HepG2 (cell line): ENCODE measurements at regions of chr2 and their contacts with region 1.

Region 1: GRCh38 chr2:38602732-38603401 is at the start of gene HNRNPLL:
- DNase-seq: peak; percentile 96
- ATAC-seq: peak; percentile 90
- H3K4me3 ChIP-seq: peak within 1 kb of the TSS; percentile 95 to 98 (median 97)
- H3K27ac ChIP-seq: peak within 1 kb of the TSS; percentile 92
- H3K4me1 ChIP-seq: peaks cover 47% of the 10 kb centered on the region
- H3K27me3 ChIP-seq: no peaks in the 10 kb centered on the region; a peak in 2 of 5 replicates
- CTCF ChIP-seq: peak; percentile 18; the same call in 1 of the 2 replicates
- EP300 ChIP-seq: no peak
- POLR2A ChIP-seq: peak; percentile 97
- RAD21 ChIP-seq: peak; percentile 40
- total RNA-seq, gene HNRNPLL: 91.9 and 103 TPM in 2 replicates

Region 2: GRCh38 chr2:38581193-38582147 is 21.4 kb before region 1 on chr2:
- CTCF ChIA-PET with region 1: no interaction called
- POLR2A ChIA-PET with region 1: interaction called, 13 read pairs
- in situ Hi-C with region 1: no loop called
- intact Hi-C with region 1: loop called (anchors 2 kb)
- DNase-seq: peak; percentile 80
- ATAC-seq: peak; percentile 89
- H3K4me3 ChIP-seq: no peak overlapping the region
- H3K27ac ChIP-seq: no peak overlapping the region
- H3K4me1 ChIP-seq: peaks cover 22% of the 10 kb centered on the region
- H3K27me3 ChIP-seq: no peaks in the 10 kb centered on the region
- CTCF ChIP-seq: peak; percentile 81
- EP300 ChIP-seq: no peak
- POLR2A ChIP-seq: no peak
- RAD21 ChIP-seq: peak; percentile 85

Region 3: DNA sequence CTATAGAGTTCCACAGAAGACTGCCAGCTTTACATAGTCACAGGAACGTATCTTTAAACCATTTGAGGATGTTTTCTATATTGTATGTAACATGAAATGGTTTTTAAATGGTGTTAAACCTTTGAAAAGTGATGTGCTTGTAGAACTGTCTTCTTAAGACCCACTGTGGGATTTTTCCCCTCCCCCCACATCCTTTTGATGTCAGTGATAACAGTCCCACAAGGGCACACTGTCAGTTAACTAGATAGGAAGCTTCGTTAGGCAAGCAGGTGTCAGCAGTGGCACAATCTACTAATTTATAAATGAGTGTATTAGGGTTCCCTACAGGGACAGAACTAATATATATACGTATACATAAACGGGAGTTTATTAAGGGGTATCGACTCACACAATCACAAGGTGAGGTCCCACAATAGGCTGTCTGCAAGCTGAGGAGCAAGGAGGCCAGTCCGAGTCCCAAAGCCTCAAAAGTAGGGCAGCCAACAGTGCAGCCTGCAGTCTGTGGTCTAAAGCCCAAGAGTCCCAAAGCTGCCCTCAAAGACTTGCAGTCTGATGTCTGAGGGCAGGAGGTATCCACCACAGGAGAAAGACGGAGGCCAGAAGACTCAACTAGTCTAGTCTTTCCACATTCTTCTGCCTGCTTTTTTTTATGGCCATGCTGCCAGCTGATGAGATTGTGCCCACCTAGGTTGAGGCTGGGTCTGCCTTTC is 23.6 kb after region 1 on chr2:
- CTCF ChIA-PET with region 1: no interaction called
- POLR2A ChIA-PET with region 1: interaction called, 3 read pairs
- in situ Hi-C with region 1: no loop called
- intact Hi-C with region 1: loop called (anchors 2 kb)
- DNase-seq: no peak
- ATAC-seq: peak; percentile 19; the same call in 2 of the 3 replicates
- H3K4me3 ChIP-seq: no peak overlapping the region
- H3K27ac ChIP-seq: no peak overlapping the region
- H3K4me1 ChIP-seq: peaks cover 52% of the 10 kb centered on the region
- H3K27me3 ChIP-seq: no peaks in the 10 kb centered on the region
- CTCF ChIP-seq: no peak
- EP300 ChIP-seq: no peak
- POLR2A ChIP-seq: no peak
- RAD21 ChIP-seq: no peak

Region 4: GRCh38 chr2:38648107-38648761 is 45.4 kb after region 1 on chr2:
- CTCF ChIA-PET with region 1: no interaction called
- POLR2A ChIA-PET with region 1: no interaction called
- in situ Hi-C with region 1: no loop called
- intact Hi-C with region 1: no loop called
- DNase-seq: peak; percentile 40
- ATAC-seq: peak; percentile 51
- H3K4me3 ChIP-seq: peak overlapping the region in 1 of 3 experiments; percentile 20; a peak in 3 of 6 replicates
- H3K27ac ChIP-seq: no peak overlapping the region
- H3K4me1 ChIP-seq: peaks cover 49% of the 10 kb centered on the region
- H3K27me3 ChIP-seq: no peaks in the 10 kb centered on the region; a peak in 2 of 5 replicates
- CTCF ChIP-seq: no peak
- EP300 ChIP-seq: no peak
- POLR2A ChIP-seq: no peak
- RAD21 ChIP-seq: no peak

Region 5: DNA sequence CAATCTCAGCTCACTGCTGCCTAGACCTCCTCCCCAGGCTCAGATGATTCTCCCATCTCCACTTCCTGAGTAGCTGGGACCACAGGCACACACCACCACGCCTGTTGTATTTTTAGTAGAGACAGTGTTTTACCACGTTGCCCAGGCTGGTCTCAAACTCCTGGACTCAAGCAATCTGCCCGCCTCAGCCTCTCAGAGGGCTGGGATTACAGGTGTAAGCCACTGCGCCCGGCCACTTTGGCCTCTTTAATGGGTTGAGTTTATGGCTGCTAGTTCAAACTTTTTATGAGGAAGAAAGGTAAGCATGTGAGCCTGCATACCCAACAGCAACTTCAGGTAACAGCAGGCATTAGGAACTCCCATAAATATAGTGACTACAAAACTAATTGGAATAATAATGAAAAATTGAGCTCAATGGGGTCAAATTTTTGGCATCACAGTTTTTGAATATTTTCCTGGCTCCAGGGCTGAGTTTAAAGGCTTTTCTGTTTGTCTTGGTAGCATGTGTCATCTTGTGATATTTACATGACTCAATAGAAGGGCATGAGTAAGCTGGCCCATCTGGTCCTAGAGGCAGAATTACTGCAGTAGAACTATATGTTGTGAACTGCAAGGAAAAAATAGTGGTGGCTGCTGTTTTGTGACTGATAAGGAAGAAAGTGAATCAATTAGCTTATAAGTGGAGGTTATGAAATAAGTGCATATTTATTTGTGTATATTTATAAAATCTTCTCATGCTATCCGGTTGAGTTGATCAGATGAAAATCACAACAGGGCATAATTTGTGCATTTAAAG is 87.8 kb after region 1 on chr2:
- CTCF ChIA-PET with region 1: no interaction called
- POLR2A ChIA-PET with region 1: interaction called, 7 read pairs
- in situ Hi-C with region 1: no loop called
- intact Hi-C with region 1: loop called (anchors 1 kb)
- DNase-seq: peak; percentile 85
- ATAC-seq: peak; percentile 71
- H3K4me3 ChIP-seq: no peak overlapping the region
- H3K27ac ChIP-seq: peak overlapping the region; percentile 54
- H3K4me1 ChIP-seq: peaks cover 66% of the 10 kb centered on the region
- H3K27me3 ChIP-seq: no peaks in the 10 kb centered on the region
- CTCF ChIP-seq: no peak
- EP300 ChIP-seq: peak in 1 of 2 experiments; percentile 66; a peak in 2 of 4 replicates
- POLR2A ChIP-seq: no peak
- RAD21 ChIP-seq: no peak

Region 6: DNA sequence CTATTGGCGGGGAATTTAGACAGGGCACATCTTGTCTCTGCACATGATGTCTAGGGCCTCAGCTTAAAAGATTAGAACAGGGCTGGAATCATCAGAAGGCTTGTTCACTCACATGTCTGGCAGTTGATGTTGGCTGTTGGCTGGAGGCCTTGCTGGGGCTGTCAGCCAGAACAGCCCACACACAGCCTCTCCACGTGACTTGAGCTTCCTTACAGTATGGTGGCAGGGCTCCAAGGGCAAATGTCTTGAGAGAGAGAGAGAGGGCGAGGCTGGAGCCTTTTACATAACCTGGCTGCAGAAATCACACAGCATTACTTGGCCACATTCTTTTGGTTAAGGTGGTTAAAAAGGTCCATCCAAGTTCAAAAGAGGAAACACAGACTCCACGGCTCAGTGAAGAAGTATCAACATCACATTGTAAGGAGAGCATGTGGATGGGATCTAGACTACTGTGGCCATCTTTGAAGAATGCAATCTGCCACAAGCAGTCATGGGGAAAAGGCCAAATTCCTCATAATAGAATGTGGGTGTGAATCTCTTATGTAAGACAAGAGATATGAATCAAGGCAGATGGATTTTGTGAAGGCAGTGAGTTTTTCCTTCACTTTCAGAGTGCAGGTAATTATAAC is 117.9 kb after region 1 on chr2:
- CTCF ChIA-PET with region 1: interaction called, 15 read pairs
- POLR2A ChIA-PET with region 1: no interaction called
- in situ Hi-C with region 1: loop called (anchors 5 kb)
- intact Hi-C with region 1: no loop called
- DNase-seq: no peak
- ATAC-seq: no peak
- H3K4me3 ChIP-seq: no peak overlapping the region
- H3K27ac ChIP-seq: no peak overlapping the region
- H3K4me1 ChIP-seq: peaks cover 10% of the 10 kb centered on the region
- H3K27me3 ChIP-seq: no peaks in the 10 kb centered on the region
- CTCF ChIP-seq: no peak
- EP300 ChIP-seq: no peak
- POLR2A ChIP-seq: no peak
- RAD21 ChIP-seq: no peak

Region 7: GRCh38 chr2:38734299-38735058 is 131.6 kb after region 1 on chr2:
- CTCF ChIA-PET with region 1: no interaction called
- POLR2A ChIA-PET with region 1: interaction called, 14 read pairs
- in situ Hi-C with region 1: no loop called
- intact Hi-C with region 1: loop called (anchors 2 kb)
- DNase-seq: no peak
- ATAC-seq: no peak
- H3K4me3 ChIP-seq: no peak overlapping the region
- H3K27ac ChIP-seq: peak overlapping the region; percentile 40
- H3K4me1 ChIP-seq: peaks cover 66% of the 10 kb centered on the region
- H3K27me3 ChIP-seq: no peaks in the 10 kb centered on the region
- CTCF ChIP-seq: no peak
- EP300 ChIP-seq: no peak
- POLR2A ChIP-seq: no peak
- RAD21 ChIP-seq: no peak

Region 8: GRCh38 chr2:38947240-38948239 is 344.7 kb after region 1 on chr2:
- CTCF ChIA-PET with region 1: no interaction called
- POLR2A ChIA-PET with region 1: no interaction called
- in situ Hi-C with region 1: no loop called
- intact Hi-C with region 1: no loop called
- DNase-seq: peak; percentile 89
- ATAC-seq: peak; percentile 94
- H3K4me3 ChIP-seq: peak overlapping the region in 1 of 3 experiments; percentile 32; a peak in 2 of 6 replicates
- H3K27ac ChIP-seq: peak overlapping the region; percentile 39
- H3K4me1 ChIP-seq: peaks cover 46% of the 10 kb centered on the region
- H3K27me3 ChIP-seq: no peaks in the 10 kb centered on the region
- CTCF ChIP-seq: peak; percentile 97
- EP300 ChIP-seq: peak in 1 of 2 experiments; percentile 24; a peak in 1 of 4 replicates
- POLR2A ChIP-seq: no peak
- RAD21 ChIP-seq: peak; percentile 86